Activated B cell treated with CpG ODN at 0.5 μM for 24 hours (primary cell): ENCODE measurements at regions of chr9 and their contacts with region 1.

Region 1: GRCh38 chr9:18255158-18255629 is 218.8 kb upstream of the ADAMTSL1 start:
- DNase-seq: peak; percentile 29
- ATAC-seq: peak; percentile 72
- H3K4me3 Mint-ChIP-seq: no peak overlapping the region
- H3K27ac Mint-ChIP-seq: no peak overlapping the region
- H3K4me1 Mint-ChIP-seq: no peaks in the 10 kb centered on the region
- H3K27me3 Mint-ChIP-seq: peaks cover 4% of the 10 kb centered on the region
- CTCF ChIP-seq: peak; percentile 93

Region 2: DNA sequence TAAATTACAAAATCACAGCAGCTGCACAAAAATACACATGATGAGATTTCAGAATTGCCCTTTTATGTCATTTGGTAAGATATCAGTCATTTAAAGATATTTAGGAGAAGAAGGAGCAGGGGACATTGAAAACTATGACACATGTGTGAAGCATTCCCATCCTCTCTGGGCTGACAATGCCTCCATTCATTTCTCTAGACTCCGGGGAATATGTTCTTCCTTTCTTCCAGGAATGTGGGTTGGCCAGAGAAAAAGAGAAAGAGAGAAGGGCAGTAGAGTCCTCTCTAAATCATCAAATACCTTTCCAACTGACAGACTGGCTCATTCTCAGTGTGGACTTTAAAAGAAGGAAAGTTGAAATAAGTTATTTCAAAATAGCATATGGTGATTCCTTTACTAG is 13.2 kb after region 1 on chr9:
- CTCF ChIA-PET with region 1: interaction called, 12 read pairs
- POLR2A ChIA-PET with region 1: no interaction called
- intact Hi-C with region 1: no loop called
- DNase-seq: no peak
- ATAC-seq: no peak
- H3K4me3 Mint-ChIP-seq: no peak overlapping the region
- H3K27ac Mint-ChIP-seq: no peak overlapping the region
- H3K4me1 Mint-ChIP-seq: no peaks in the 10 kb centered on the region
- H3K27me3 Mint-ChIP-seq: no peaks in the 10 kb centered on the region
- CTCF ChIP-seq: no peak

Region 3: GRCh38 chr9:19028835-19029451 is 773.7 kb after region 1 on chr9:
- CTCF ChIA-PET with region 1: interaction called, 16 read pairs
- POLR2A ChIA-PET with region 1: no interaction called
- intact Hi-C with region 1: loop called (anchors 1 kb)
- DNase-seq: no peak
- ATAC-seq: peak; percentile 49
- H3K4me3 Mint-ChIP-seq: no peak overlapping the region
- H3K27ac Mint-ChIP-seq: no peak overlapping the region
- H3K4me1 Mint-ChIP-seq: peaks cover 2% of the 10 kb centered on the region
- H3K27me3 Mint-ChIP-seq: peaks cover 5% of the 10 kb centered on the region
- CTCF ChIP-seq: no peak

Region 4: GRCh38 chr9:19828576-19829109 is 1573.4 kb after region 1 on chr9:
- CTCF ChIA-PET with region 1: no interaction called
- POLR2A ChIA-PET with region 1: no interaction called
- intact Hi-C with region 1: no loop called
- DNase-seq: no peak
- ATAC-seq: no peak
- H3K4me3 Mint-ChIP-seq: no peak overlapping the region
- H3K27ac Mint-ChIP-seq: no peak overlapping the region
- H3K4me1 Mint-ChIP-seq: no peaks in the 10 kb centered on the region
- H3K27me3 Mint-ChIP-seq: no peaks in the 10 kb centered on the region
- CTCF ChIP-seq: no peak